ENCODE measurements at regions of chr11 and their contacts with region 1.

Region 1: DNA sequence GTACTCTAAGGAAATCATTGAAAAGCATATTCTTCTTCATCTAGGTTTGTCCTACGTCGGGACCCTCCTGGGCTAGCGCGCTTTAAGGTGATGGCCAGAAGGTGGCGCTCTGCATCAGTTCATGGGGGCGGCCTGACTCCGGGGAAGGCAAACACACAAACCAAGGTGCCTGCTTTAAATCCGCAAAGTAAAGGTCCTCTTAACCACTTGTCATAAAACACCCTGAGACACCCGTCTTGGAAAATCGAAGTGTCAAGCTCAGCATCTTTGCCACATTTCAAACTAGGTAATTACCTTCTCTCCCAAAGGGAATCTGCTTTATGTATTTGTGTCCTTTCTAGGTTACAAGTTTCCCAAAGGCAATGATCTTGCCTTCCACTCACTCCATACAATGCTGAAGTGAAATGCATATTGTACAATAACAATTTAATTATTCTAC is 33.9 kb downstream of the LMO2 start:
- DNase-seq: peak; percentile 82
- ATAC-seq: peak; percentile 90

Region 2: GRCh38 chr11:33620423-33621171 is 237.4 kb before region 1 on chr11:
- intact Hi-C with region 1: no loop called
- DNase-seq: no peak
- ATAC-seq: peak; percentile 18

Region 3: GRCh38 chr11:33970984-33971466 is 113.1 kb after region 1 on chr11:
- intact Hi-C with region 1: loop called (anchors 1 kb)
- DNase-seq: no peak
- ATAC-seq: peak; percentile 80

Region 4: DNA sequence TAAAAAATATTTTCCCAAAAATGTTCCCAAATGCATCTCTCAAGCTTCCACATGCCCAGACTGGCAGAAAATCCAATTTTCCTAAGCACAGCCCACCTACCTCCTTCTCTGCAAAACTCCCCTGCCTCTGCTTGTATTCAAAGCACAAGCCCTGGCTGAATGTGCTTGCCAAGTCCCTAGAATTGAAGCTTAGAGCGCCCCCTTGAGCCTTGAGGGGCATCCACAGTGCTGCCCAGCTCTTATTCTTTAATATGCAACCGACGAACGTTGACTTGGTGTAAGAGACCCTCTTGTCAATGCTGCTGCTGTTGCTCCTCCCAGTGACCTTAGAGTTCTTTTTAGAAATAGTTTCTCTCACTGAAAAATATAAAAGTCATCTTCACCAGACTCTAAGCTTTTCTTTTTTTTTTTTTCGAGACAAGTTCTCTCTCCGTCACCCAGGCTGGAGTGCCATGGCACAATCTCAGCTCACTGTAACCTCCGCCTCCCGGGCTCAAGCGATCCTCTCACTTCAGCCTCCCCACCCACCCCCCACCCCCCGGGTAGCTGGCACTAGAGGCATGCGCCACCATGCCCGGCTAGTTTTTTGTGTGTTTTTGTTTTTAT is 130.1 kb after region 1 on chr11:
- intact Hi-C with region 1: loop called (anchors 5 kb)
- DNase-seq: peak; percentile 60
- ATAC-seq: peak; percentile 84